ENCODE measurements at regions of chr10 and their contacts with region 1.

Region 1: GRCh38 chr10:124641282-124642087 is 102.7 kb downstream of the FAM53B start:
- DNase-seq: peak; percentile 71
- ATAC-seq: peak; percentile 78 to 80

Region 2: DNA sequence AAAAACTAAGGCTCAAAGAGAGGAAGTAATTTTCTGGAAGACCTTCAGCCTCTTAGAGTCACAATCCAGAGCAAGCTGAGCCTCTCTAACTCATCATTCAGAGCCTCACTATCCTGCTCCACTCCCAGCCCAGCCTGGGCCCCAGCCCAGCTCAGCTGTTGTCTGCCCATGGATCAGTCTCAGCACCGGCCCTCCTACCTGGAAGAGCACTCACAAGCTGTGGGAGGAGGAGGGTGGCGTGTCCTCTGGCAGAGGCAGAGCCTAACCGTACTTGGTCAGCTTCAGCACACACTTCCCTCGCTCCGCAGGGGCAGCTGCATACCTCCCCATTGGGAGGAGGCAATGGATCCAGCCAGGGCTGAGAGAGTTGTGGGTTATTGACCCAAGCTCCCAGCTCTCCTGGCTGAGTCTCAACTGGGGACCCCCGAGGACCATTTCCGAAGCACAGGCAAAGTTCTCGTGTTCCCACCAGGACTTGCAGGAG is 1042.1 kb before region 1 on chr10:
- intact Hi-C with region 1: no loop called
- DNase-seq: no peak
- ATAC-seq: no peak

Region 3: DNA sequence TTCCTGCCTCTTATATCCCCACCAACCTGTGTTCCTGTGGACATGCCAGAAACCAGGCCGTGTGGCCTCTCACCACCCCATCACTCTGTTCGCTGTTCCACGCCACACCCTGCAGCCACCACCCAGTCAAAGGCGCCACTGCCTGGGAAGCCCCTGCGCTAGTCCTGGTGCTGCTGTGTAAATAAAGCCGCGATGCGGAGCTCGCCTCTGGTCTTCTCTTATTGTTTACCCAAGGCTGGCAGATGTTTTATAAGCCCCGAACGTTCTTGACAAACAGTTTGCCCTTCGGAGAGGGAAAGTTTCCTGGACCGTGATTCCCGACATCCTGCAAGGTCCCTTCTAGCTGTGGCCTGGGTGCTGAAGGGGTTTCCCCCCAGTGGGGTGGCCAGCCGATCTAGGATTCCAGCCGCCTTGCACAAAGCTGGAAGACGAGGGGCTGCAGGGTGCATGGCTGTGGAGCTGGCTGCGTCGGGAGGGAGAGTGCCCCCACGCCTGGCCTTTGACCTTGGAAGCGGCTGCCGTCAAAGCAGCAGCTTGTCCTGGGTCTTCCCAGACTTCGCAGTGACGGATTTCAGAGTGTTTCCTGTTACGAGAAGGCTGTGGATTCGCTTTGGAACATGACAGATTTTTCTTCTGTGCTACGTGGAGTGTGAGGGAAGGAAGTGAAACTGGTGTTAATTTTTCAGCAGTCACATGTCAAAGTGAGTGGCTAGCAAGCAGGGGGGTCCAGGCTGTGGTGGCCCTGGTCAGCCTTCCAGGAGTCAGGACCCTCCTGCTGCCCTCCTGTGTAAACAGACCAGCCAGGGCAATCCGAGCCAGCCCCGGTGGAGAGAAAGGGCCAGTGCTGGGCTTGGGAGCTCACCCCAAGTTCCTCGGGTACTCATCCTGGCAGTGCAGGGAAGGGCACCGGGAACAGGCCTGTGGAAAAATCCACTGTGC is 118.3 kb before region 1 on chr10:
- intact Hi-C with region 1: no loop called
- DNase-seq: no peak
- ATAC-seq: peak in 1 of 2 donors; percentile 10

Region 4: GRCh38 chr10:124601431-124602120 is 39.9 kb before region 1 on chr10:
- intact Hi-C with region 1: no loop called
- DNase-seq: peak; percentile 20
- ATAC-seq: no peak

Region 5: DNA sequence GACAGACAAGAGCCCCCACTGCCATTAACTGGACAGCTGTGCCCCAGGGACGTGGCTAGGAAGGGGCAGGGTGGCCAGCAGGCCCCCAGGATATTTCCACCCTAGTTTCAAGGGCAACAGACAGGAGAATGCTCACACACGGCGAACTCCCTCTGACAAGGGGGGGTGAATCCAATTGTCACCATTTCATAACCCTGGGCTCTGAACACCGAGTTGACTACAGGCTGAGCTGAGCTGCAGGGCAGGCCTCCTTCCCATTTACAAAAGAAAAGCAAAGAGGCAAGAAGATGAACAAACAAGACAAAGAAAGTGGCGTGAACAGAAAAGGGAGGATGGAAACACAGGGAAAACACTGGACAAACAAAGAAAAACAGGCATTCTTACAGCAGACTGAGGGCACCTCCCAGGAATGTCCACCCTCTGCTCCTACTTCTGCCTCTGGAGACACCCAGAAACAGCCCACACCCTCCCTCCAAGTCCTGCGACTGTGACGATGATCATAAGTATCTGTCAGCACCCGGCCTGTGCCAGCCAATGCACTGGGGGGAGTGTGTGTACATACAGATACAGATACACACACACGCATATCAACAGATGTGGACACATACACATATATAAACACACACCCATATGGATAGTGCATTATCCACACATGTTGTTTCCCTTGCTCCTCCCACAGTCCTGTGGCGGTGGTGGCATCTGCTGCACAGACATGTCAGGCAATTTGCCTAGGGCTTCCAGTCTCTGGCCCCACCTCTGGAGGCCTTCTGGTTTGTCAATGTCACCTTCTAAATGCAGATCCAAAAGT is 36.5 kb after region 1 on chr10:
- intact Hi-C with region 1: loop called in 1 of 2 experiments (anchors 5 kb)
- DNase-seq: peak; percentile 61
- ATAC-seq: peak; percentile 75 to 77

Region 6: DNA sequence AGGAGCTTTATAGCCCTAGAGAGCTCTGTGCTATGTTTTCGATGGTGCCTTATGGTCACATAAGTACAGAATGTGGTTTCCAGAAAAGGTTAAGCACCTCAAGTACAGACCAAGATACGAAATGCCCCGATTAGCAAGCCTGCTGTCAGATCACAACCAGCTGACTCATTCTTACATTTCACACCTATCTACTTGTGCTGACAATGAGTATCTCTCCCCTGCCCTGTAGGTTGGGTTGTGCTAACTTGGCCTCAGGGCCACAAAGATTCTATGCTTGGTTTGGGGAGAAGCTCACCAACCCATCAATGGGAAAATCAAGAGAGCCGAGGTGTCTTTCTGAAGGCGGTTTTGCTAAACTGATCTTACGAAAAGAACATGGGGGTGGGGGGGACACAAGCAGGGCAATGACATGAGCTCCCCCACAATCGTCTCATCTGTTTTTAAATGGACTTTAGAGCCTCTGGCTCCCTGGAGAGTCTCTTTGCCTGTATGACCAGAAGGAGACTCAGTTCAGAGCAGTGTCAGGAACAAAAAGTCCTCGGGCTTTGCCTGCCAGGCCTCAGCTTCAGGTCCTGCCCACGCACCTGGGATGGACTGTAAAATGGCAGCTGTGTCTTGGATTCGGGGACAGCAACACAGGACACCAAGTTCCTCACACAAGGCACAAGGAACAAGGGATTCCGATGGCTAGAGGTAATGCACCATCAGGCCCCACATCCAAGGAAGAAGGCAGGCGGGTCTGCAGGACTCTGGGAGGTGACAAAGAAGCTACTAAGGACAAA is 47.6 kb after region 1 on chr10:
- intact Hi-C with region 1: no loop called
- DNase-seq: no peak
- ATAC-seq: peak; percentile 45 to 57